Right ventricle myocardium inferior (tissue), 1 donor: ENCODE measurements at regions of chr3 and their contacts with region 1.

Region 1: GRCh38 chr3:128236657-128237056 is 83.4 kb downstream of the EEFSEC start:
- DNase-seq: no peak
- ATAC-seq: peak; percentile 40

Region 2: GRCh38 chr3:128194843-128195242 is 41.8 kb before region 1 on chr3:
- intact Hi-C with region 1: loop called (anchors 5 kb)
- DNase-seq: no peak
- ATAC-seq: peak; percentile 85

Region 3: DNA sequence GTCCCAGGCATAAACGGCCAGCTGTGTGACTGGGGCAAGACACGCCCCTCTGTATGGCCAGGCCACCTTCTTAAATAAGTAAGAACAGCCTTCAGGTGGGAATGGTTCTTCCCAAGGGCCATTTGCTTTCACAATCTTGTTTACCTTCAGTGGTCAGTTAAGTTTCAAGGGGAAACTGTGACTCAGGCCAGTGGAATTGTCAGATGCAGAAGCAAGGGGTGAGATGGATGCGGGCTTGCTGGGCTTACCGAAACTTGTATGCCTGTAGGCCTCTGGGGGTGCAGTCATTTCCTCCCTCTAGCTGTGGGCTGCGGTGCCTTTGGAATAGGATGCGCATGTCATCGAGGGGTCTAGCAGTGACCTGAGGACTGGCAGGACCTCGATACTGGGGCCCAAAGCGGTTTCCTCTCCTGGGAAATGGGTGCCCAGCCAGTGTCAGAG is 38.1 kb after region 1 on chr3:
- intact Hi-C with region 1: loop called (anchors 5 kb)
- DNase-seq: no peak
- ATAC-seq: no peak